Activated T-helper 2 cell treated with anti-CD3 and anti-CD28 coated beads, Interferon-gamma antibody, Interleukin-2, Interleukin-4, amounts not matched to agents 10 μg/mL and 5 μg/mL and 100 μg/mL, durations not matched to agents 14 hours and 24 hours and 36 hours (primary cell): ENCODE measurements at regions of chr2 and their contacts with region 1.

Region 1: DNA sequence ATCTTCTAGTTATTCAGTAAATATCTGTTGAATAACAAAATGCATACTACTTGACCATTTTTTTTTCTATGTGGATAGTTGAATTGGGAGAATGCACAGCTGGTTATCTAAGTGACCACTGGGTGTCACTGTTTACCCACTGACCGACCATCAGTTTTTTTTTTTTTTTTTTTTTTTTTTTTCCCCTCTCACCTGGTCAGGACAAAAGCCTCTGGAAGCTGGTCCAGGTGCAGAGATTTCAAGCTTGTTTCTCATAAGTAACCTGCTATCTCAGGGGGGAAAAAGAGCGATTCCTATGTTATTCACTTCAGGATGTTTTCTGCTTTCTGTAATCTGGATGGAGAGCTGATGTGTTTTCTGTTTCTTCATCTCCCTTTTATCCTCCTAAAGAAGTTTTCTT is 256.0 kb downstream of the DCDC2C start:
- DNase-seq: no peak
- H3K4me3 Mint-ChIP-seq: no peak overlapping the region
- H3K27ac Mint-ChIP-seq: no peak overlapping the region
- H3K4me1 Mint-ChIP-seq: no peaks in the 10 kb centered on the region
- H3K27me3 Mint-ChIP-seq: no peaks in the 10 kb centered on the region

Region 2: DNA sequence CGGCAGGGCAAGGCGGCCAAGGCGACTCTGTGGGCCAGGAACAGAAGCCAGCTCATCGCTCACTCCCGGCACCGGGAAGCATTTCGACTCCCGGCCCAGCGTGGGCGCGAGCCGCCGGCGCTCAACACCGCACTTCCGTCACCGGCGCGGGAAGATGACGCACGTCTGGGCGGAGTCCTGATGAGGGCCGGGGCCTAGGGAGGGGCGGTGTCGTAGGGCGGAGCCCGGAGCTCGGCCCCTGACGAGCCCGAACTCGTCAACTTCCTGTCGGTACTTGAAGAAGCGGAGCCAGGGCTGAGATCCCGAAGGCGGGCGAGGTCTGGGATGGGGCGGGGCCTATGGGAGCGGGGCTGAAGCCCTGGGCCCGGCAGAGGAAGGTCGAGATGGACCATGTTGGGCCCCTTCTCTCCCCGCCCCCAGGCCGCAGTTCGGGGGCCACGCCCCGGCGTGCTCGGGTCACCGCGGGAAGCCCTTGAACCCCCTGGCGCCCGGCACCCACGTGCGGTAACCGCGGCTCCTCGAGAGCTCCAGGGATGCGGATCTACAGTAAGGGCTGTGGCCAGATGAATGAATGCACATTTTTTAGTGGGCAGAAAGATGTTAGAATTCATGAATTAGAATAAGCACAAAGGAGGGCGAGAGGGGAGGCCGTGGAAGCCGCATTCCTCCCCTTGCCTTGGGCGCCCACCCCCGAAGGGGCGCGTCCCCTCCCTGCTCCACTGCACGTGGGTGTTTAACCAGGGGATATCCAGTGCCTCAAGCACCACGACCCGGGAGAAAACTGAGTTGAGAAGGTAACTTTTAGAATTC is 401.0 kb before region 1 on chr2 and contains the start of gene RNASEH1:
- intact Hi-C with region 1: no loop called
- DNase-seq: peak; percentile 97
- H3K4me3 Mint-ChIP-seq: peak within 1 kb of the TSS; percentile 91
- H3K27ac Mint-ChIP-seq: peak within 1 kb of the TSS; percentile 94
- H3K4me1 Mint-ChIP-seq: peaks cover 20% of the 10 kb centered on the region
- H3K27me3 Mint-ChIP-seq: no peaks in the 10 kb centered on the region
- total RNA-seq, gene RNASEH1: 29.0 and 30.3 TPM in 2 replicates

Region 3: DNA sequence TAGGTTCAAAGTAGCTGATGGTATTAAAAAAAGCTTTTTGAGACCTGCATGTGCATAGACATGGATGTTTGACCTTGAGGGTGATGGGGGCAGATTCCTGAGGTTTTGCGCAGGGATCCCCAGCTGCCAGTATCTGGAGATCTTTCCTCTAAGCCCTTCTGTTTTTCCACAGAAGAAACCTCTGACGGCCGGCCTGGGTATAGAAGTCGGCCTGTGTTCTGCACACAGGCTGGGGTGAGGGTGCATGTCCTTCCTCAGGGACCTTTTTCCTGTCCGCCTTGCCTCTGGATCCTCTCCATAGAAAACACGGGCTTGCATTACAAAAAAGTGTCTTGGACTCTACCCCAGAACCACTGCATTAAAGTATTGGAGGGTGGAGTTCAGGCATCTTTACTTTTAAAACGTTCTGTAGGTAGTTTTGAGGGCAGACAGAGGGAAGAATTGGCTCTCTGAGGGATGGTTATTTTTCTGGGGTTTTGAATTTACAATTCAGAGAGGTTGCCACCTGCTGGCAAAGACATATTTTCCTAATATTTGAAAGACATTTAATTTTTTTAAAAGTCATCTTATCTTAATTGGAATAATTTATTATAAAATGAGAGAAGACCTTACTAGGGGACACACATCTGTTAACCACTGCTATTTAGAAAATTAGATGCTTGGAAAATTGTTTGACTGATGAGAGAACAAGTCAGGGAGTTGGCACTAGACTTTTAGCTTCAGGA is 94.6 kb after region 1 on chr2:
- intact Hi-C with region 1: loop called (anchors 5 kb)
- DNase-seq: no peak
- H3K4me3 Mint-ChIP-seq: no peak overlapping the region
- H3K27ac Mint-ChIP-seq: no peak overlapping the region
- H3K4me1 Mint-ChIP-seq: no peaks in the 10 kb centered on the region
- H3K27me3 Mint-ChIP-seq: peaks cover 3% of the 10 kb centered on the region

Region 4: DNA sequence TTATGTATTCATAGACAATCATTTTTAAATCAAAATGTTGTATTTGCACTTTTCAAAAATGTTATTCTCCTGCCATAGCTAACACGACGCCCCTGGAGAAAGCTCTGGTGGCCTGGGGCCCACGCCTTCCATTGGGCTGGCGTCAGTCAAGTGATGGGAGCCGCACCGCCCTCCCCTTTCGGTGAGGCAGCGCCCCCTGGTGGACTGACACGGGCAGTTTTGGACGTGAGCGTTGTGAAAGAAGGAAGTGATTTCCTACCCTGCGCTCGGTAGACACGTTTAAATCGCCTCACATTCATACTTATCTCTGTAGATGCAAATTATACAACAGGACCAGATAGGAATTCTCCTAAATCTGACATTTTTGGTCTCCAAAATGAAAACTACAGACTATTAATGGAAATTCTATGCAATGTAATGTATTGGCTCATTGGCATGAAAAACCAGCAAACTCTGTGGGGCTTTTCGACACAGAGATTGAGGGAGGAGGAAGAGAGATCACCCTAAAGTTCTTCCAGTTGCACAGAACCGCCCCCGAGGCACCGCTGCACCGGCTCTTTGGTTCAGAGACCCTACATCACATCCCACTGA is 1406.6 kb after region 1 on chr2:
- intact Hi-C with region 1: loop called (anchors 10 kb)
- DNase-seq: peak; percentile 27
- H3K4me3 Mint-ChIP-seq: no peak overlapping the region
- H3K27ac Mint-ChIP-seq: no peak overlapping the region
- H3K4me1 Mint-ChIP-seq: no peaks in the 10 kb centered on the region
- H3K27me3 Mint-ChIP-seq: no peaks in the 10 kb centered on the region